Right cardiac atrium (tissue), 5 donors: ENCODE measurements at regions of chr18 and their contacts with region 1.

Region 1: GRCh38 chr18:23924813-23925212 is 89.7 kb upstream of the TTC39C start:
- DNase-seq: no peak
- ATAC-seq: no peak
- H3K4me3 ChIP-seq: no peak overlapping the region
- H3K27ac ChIP-seq: no peak overlapping the region
- H3K4me1 ChIP-seq: no peaks in the 10 kb centered on the region
- H3K27me3 ChIP-seq: no peaks in the 10 kb centered on the region

Region 2: DNA sequence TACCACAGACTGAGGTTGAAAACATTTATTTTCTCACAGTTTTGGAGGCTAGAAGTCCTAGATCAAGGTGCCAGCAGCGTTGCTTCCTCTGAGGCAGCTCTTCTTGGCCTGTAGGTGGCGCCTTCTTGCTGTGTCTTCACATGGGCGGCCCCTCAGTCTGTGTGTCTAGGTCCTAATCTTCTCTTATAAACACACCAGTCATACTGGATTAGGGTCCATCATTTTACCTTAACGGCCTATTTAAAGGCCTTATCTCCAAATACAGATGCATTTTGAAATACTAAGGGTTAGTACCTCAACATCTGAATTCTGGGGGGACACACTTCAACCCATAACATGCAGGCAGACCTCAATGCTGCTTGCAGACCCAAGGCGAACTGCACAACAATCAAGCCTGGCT is 425.9 kb before region 1 on chr18:
- intact Hi-C with region 1: no loop called
- DNase-seq: peak; percentile 58 to 81 (median 65)
- ATAC-seq: no peak
- H3K4me3 ChIP-seq: no peak overlapping the region
- H3K27ac ChIP-seq: no peak overlapping the region
- H3K4me1 ChIP-seq: no peaks in the 10 kb centered on the region
- H3K27me3 ChIP-seq: no peaks in the 10 kb centered on the region

Region 3: DNA sequence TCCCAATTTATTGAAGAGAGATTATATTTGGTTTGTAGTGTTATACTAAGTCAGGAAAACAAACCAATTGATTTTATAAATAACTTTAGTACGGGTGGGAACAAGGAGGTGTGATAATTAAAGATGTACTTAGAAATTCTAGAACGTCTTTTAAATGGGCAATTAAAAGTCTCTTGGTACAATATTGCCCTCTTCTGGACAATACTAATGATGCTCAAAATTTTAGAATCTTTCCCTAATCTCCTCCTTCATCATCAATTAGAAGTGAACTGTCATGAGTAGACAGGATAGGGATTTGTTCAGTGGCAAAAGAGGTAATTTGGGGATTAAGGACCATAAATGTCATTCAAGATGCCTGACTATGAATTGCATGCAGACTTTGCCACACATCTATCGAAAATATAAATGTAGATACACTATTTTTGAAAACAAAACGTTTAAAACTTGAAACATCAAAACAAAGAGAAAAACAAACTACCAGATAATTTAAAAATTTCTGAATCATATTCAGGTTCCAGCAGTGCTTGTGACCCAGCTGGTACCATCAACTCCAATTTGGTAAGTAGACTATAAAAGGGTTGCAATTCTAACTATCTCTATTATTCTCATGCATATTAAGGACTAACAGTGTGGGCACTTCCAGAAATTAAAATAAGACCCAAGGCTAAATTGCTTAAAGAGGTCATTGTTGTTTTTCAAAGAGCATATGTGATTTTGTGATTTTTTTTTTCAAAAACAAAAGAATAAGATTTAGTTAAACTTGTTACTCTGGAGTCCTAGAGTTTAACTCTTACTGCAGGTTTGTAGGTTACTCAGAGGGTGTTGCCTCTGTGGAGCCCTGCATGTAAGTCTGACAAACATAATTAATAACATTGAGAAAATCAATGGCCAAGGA is 112.0 kb before region 1 on chr18:
- intact Hi-C with region 1: loop called in 1 of 4 experiments (anchors 10 kb)
- DNase-seq: no peak
- ATAC-seq: no peak
- H3K4me3 ChIP-seq: no peak overlapping the region
- H3K27ac ChIP-seq: no peak overlapping the region
- H3K4me1 ChIP-seq: no peaks in the 10 kb centered on the region
- H3K27me3 ChIP-seq: no peaks in the 10 kb centered on the region

Region 4: DNA sequence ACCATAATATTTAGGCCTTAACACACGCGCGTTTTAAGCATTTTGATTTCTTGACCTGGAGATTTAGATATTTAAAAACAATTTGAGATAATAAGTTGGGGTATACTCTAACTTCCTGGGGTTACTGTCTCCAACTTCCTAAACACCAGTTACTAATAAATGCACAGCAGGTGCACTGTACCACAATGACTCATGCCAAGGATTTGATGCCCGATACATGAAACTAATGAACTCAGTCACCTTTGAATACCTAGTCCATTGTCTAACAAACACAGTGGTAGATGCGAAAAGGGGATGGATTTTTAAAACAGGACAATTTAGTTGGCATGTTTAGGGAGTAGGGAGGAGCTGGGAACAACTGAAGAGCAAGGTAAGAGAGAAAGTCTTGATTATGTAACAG is 235.3 kb after region 1 on chr18:
- intact Hi-C with region 1: no loop called
- DNase-seq: no peak
- ATAC-seq: no peak
- H3K4me3 ChIP-seq: no peak overlapping the region
- H3K27ac ChIP-seq: no peak overlapping the region
- H3K4me1 ChIP-seq: no peaks in the 10 kb centered on the region
- H3K27me3 ChIP-seq: no peaks in the 10 kb centered on the region